Activated naive CD4-positive, alpha-beta T cell treated with anti-CD3 and anti-CD28 coated beads, Interleukin-2, amount 10 ng/mL, durations not matched to agents 7 days and 5 days (primary cell): ENCODE measurements at regions of chr1 and their contacts with region 1.

Region 1: GRCh38 chr1:92858564-92859399 is 26.9 kb downstream of the RPL5 start:
- DNase-seq: peak; percentile 65
- H3K4me3 Mint-ChIP-seq: peak overlapping the region; percentile 41
- H3K27ac Mint-ChIP-seq: peak overlapping the region; percentile 56
- H3K4me1 Mint-ChIP-seq: peaks cover 38% of the 10 kb centered on the region
- H3K27me3 Mint-ChIP-seq: no peaks in the 10 kb centered on the region

Region 2: GRCh38 chr1:92536980-92537884 is 321.6 kb before region 1 on chr1:
- CTCF ChIA-PET with region 1: no interaction called
- DNase-seq: peak; percentile 25
- H3K4me3 Mint-ChIP-seq: peak overlapping the region; percentile 62
- H3K27ac Mint-ChIP-seq: peak overlapping the region; percentile 93
- H3K4me1 Mint-ChIP-seq: peaks cover 80% of the 10 kb centered on the region
- H3K27me3 Mint-ChIP-seq: no peaks in the 10 kb centered on the region

Region 3: GRCh38 chr1:92872719-92873118 is 13.9 kb after region 1 on chr1:
- CTCF ChIA-PET with region 1: interaction called, 17 read pairs
- DNase-seq: no peak
- H3K4me3 Mint-ChIP-seq: no peak overlapping the region
- H3K27ac Mint-ChIP-seq: no peak overlapping the region
- H3K4me1 Mint-ChIP-seq: peaks cover 22% of the 10 kb centered on the region
- H3K27me3 Mint-ChIP-seq: no peaks in the 10 kb centered on the region

Region 4: GRCh38 chr1:92877792-92878191 is 19.0 kb after region 1 on chr1:
- CTCF ChIA-PET with region 1: interaction called, 16 read pairs
- DNase-seq: no peak
- H3K4me3 Mint-ChIP-seq: no peak overlapping the region
- H3K27ac Mint-ChIP-seq: peak overlapping the region; percentile 63
- H3K4me1 Mint-ChIP-seq: peaks cover 34% of the 10 kb centered on the region
- H3K27me3 Mint-ChIP-seq: no peaks in the 10 kb centered on the region

Region 5: GRCh38 chr1:92951141-92951582 is 92.4 kb after region 1 on chr1:
- CTCF ChIA-PET with region 1: interaction called, 142 read pairs
- DNase-seq: peak; percentile 58
- H3K4me3 Mint-ChIP-seq: no peak overlapping the region
- H3K27ac Mint-ChIP-seq: no peak overlapping the region
- H3K4me1 Mint-ChIP-seq: peaks cover 46% of the 10 kb centered on the region
- H3K27me3 Mint-ChIP-seq: no peaks in the 10 kb centered on the region

Region 6: DNA sequence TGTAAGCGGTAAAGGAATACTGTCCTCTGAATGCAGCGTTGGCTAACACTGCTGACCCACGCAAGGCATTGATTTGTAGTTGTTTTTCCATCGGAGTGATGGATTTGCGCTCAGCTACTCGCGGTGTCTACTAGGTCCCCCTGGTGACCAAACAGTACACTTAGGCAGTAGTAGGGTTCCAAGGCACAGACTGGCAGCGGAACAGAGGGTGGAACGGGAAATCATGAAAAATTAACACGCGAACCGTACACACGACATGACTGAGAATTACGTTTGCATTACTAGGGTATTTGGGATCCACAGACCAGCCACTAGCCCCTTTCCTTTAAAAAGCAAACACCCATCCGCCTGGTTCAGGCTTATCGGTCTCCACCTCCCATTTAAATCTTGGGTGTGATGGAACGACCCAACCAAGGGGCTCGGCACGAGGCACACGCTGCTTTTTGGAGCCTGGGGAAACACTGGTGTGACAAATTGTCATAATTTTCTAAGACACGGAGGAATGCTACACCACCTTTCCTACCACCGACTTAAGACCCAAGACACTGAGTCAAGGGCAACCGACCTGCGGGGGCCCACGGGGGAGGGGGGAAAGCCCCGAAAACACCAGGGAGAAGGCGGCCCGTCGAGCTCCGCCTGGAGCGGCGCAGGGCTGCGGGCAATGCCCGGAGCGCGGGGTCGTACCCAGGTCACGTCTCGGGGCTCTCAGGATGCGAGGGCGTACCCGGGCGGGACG is 101.8 kb after region 1 on chr1:
- CTCF ChIA-PET with region 1: interaction called, 142 read pairs
- DNase-seq: peak; percentile 77
- H3K4me3 Mint-ChIP-seq: peak overlapping the region; percentile 88
- H3K27ac Mint-ChIP-seq: peak overlapping the region; percentile 98
- H3K4me1 Mint-ChIP-seq: peaks cover 40% of the 10 kb centered on the region
- H3K27me3 Mint-ChIP-seq: no peaks in the 10 kb centered on the region

Region 7: GRCh38 chr1:92968138-92969032 is 109.6 kb after region 1 on chr1:
- CTCF ChIA-PET with region 1: interaction called, 142 read pairs
- DNase-seq: peak; percentile 37
- H3K4me3 Mint-ChIP-seq: no peak overlapping the region
- H3K27ac Mint-ChIP-seq: no peak overlapping the region
- H3K4me1 Mint-ChIP-seq: peaks cover 43% of the 10 kb centered on the region
- H3K27me3 Mint-ChIP-seq: no peaks in the 10 kb centered on the region